MCF 10A (cell line): ENCODE measurements at regions of chr3 and their contacts with region 1.

Region 1: DNA sequence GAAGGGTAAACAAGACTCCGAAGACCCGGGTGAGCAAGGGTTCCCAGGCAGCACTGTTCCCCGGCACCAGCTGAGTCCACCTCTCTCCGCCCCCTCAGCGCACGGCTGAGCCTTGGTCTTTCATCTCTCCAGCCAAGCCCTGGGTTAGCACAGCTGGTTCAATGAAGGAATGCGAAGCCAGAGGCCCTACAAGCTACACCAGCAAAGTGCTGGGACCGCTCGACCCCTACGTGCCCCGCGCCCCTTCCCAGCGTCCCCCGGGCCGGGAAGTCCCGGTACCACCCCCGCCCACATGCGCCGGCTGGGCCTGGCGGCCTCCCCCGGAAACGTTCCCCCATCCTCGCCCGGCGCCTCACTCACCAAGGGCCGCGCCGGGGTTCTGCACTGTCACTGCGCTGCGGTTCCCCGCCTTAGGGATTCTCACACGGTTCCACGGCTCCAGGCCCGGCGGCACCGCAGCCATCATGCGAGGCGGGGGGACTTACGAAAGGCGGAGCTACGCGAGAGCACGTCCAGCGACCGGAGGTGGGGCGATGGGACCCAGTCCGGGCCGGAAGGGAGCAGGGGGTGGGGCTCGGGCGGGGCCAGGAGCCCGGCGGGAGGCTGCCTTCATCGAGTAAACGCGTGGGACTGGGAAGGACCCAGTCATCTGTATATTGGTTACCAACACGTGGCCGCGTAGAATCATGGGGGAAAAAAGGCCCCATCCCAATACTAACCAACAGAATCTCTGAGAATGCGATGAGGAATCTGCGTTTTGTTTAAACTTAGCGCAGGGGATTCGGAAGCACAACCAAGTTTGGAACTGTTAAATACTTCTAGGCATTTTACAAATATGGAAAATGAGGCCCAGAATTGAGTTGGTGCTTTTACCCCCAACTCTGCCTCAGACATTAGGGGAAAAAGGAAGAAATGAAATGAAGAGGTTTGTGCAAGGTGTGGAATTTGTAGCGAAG is 28.7 kb downstream of the GTPBP8 start:
- DNase-seq: peak; percentile 89
- H3K4me3 Mint-ChIP-seq: peak overlapping the region; percentile 97
- H3K27ac Mint-ChIP-seq: peak overlapping the region; percentile 98
- H3K4me1 Mint-ChIP-seq: peaks cover 31% of the 10 kb centered on the region
- H3K27me3 Mint-ChIP-seq: no peaks in the 10 kb centered on the region
- CTCF ChIP-seq: no peak

Region 2: DNA sequence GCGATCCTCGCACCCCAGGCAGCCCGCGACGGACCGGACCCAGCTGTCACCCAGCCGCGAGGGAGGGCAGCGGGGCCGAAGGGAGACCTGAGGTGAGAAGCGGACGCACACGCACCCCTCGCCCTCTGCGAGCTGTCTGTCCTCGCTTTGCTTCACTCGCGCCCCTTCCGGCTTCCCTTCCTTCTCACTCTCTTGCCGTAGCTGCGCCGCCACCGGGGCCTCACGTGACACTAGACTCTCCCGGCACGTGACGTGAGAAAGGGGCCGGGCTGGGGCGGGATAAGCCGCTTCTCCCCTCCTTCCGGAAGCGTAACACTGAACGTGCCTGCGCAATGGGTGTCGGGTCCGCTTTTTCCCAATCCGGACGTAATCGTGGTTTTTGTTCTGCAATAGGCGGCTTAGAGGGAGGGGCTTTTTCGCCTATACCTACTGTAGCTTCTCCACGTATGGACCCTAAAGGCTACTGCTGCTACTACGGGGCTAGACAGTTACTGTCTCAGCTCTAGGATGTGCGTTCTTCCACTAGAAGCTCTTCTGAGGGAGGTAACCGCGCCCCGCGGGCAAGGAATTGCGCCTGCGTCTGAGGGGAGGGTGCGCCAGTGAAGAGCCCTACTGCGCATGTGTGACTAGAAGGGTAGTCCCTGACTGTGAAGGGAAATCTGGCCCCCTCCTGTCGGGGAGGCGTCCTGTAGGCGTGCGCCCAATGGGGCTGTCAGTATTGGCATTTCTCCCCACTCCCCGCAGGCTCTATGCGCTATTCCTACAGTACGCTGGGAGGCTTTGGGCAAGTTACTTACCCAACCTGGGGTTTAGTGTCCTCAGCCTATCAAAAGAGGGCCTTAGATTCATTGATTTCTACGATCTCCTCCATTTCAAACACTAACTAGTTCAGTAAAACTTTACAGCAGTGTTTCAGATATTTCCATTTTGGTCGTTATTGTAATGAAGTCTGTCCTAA is 457.4 kb before region 1 on chr3 and contains the starts of genes ATG3 and SLC35A5:
- CTCF ChIA-PET with region 1: no interaction called
- POLR2A ChIA-PET with region 1: interaction called, 11 read pairs
- intact Hi-C with region 1: no loop called
- DNase-seq: peak; percentile 99
- H3K4me3 Mint-ChIP-seq: peak within 1 kb of the TSS; percentile 96
- H3K27ac Mint-ChIP-seq: peak within 1 kb of the TSS; percentile 98
- H3K4me1 Mint-ChIP-seq: peaks cover 12% of the 10 kb centered on the region
- H3K27me3 Mint-ChIP-seq: no peaks in the 10 kb centered on the region
- CTCF ChIP-seq: no peak
- total RNA-seq, gene ATG3: 87.8 and 97.2 TPM in 2 replicates
- total RNA-seq, gene SLC35A5: 23.3 and 26.7 TPM in 2 replicates

Region 3: DNA sequence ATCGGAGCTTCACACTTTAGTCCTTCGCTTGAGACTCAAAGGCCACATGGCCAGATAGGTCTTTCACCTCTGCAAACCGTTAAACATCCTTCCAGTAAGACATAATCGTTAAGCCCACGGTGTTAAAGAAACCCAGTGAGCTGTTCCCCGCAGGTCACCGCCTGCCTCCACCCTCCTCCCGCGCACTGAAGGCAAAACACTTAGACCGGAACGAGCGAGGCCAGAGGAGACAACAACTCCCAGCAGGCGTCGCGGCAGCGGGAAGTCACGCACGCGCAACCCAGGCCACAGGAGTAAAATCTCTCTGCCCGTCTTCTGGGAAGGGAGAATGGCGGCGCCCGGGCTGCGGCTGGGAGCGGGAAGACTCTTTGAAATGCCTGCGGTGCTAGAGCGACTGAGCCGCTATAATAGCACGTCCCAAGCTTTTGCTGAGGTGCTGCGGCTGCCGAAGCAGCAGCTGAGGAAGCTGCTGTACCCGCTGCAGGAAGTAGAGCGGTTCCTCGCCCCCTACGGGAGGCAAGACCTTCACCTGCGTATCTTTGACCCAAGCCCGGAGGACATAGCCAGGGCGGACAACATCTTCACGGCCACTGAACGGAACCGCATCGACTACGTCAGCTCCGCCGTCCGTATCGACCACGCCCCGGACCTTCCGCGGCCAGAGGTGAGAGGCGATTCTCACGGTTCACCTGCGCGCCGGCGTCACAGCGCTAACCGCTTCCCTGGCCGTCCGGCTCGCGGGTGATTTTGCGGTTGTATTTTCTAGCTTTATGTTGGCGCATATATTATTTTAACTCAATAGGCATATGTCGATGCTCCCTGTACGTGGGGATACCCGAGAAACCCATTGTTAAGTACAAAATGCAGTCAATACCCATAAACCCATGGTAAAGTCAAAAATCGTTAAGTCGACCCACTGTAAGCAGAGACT is 28.5 kb before region 1 on chr3 and contains the start of gene GTPBP8:
- CTCF ChIA-PET with region 1: interaction called, 9 read pairs
- POLR2A ChIA-PET with region 1: interaction called, 93 read pairs
- intact Hi-C with region 1: no loop called
- DNase-seq: peak; percentile 92
- H3K4me3 Mint-ChIP-seq: peak within 1 kb of the TSS; percentile 78
- H3K27ac Mint-ChIP-seq: peak within 1 kb of the TSS; percentile 91
- H3K4me1 Mint-ChIP-seq: peaks cover 18% of the 10 kb centered on the region
- H3K27me3 Mint-ChIP-seq: peaks cover 9% of the 10 kb centered on the region
- CTCF ChIP-seq: no peak
- total RNA-seq, gene GTPBP8: 9.3 and 10.7 TPM in 2 replicates

Region 4: GRCh38 chr3:113002679-113003078 is 16.8 kb before region 1 on chr3:
- CTCF ChIA-PET with region 1: interaction called, 3 read pairs
- POLR2A ChIA-PET with region 1: interaction called, 38 read pairs
- intact Hi-C with region 1: no loop called
- DNase-seq: no peak
- H3K4me3 Mint-ChIP-seq: no peak overlapping the region
- H3K27ac Mint-ChIP-seq: no peak overlapping the region
- H3K4me1 Mint-ChIP-seq: no peaks in the 10 kb centered on the region
- H3K27me3 Mint-ChIP-seq: no peaks in the 10 kb centered on the region
- CTCF ChIP-seq: no peak

Region 5: DNA sequence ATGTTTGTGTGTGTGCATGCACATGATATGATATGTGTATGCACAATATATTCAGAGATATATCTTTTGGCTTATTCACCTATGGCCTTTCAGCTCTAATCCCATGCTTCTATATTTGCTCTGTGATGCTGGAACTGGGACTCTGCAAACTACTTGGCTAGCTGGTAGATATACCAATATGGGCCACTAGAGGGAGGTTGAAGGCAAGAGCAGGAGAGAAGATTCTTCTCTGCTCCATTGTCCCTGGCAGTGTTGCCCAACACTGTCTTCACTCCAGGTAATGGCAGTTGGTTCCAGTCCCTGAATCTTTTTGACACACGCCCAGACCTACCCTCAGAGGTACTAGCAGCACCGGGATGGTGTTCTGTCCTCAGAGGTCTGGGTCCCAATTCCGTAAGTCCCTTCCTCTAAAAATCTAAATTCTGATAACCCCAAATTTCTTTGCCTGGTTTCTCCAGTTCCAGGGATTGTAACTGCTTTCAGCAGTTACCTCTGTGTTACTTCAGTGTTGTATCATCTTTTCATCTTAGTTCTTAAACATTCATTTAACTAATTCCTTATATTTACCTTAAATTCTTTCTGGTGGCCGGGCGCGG is 16.0 kb after region 1 on chr3:
- CTCF ChIA-PET with region 1: interaction called, 19 read pairs
- POLR2A ChIA-PET with region 1: interaction called, 7 read pairs
- intact Hi-C with region 1: no loop called
- DNase-seq: peak; percentile 76
- H3K4me3 Mint-ChIP-seq: no peak overlapping the region
- H3K27ac Mint-ChIP-seq: no peak overlapping the region
- H3K4me1 Mint-ChIP-seq: peaks cover 5% of the 10 kb centered on the region
- H3K27me3 Mint-ChIP-seq: no peaks in the 10 kb centered on the region
- CTCF ChIP-seq: peak; percentile 61

Region 6: GRCh38 chr3:113514265-113514769 is 494.9 kb after region 1 on chr3:
- CTCF ChIA-PET with region 1: no interaction called
- POLR2A ChIA-PET with region 1: interaction called, 16 read pairs
- intact Hi-C with region 1: no loop called
- DNase-seq: no peak
- H3K4me3 Mint-ChIP-seq: no peak overlapping the region
- H3K27ac Mint-ChIP-seq: no peak overlapping the region
- H3K4me1 Mint-ChIP-seq: peaks cover 5% of the 10 kb centered on the region
- H3K27me3 Mint-ChIP-seq: peaks cover 9% of the 10 kb centered on the region
- CTCF ChIP-seq: no peak